Activated CD4-positive, alpha-beta T cell treated with anti-CD3 and anti-CD28 coated beads, Interleukin-2, amount 10 ng/mL, durations not matched to agents 7 days and 5 days (primary cell): ENCODE measurements at regions of chr12 and their contacts with region 1.

Region 1: GRCh38 chr12:47882781-47883546 is 21.8 kb downstream of the VDR start:
- DNase-seq: peak; percentile 63
- H3K4me3 Mint-ChIP-seq: peak overlapping the region; percentile 72
- H3K27ac Mint-ChIP-seq: peak overlapping the region; percentile 95
- H3K4me1 Mint-ChIP-seq: peaks cover 62% of the 10 kb centered on the region
- H3K27me3 Mint-ChIP-seq: no peaks in the 10 kb centered on the region

Region 2: DNA sequence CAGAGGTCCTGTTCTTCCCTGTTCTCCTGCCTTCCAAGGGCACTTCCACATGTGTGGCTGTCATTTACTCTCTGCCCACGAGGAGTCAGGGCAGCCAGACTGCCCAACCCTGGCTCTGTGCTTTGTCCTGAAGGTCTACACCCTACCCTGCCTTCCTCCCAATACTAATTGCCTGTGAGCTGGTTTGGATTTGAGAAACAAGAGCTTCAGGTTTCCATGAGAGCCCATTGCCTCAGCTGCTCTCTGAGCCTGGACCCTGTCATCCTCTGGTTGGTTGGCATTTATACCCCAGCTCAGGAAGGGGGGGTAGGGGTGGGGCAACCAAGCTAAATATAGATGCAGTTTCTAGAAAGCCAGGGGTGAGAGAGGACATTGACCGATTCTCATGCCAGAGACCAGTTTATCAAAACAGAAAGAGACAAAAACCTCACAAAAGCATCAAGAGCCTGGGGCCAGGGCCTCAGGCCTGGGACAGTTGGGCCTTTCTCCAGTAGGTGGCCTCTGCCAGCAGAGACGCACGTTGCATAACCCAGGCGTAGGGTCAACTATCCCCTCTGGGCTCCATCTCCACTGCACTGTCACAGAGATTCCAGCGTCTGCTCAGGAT is 12.7 kb before region 1 on chr12:
- CTCF ChIA-PET with region 1: interaction called, 34 read pairs
- POLR2A ChIA-PET with region 1: interaction called, 3 read pairs
- DNase-seq: no peak
- H3K4me3 Mint-ChIP-seq: no peak overlapping the region
- H3K27ac Mint-ChIP-seq: peak overlapping the region; percentile 50
- H3K4me1 Mint-ChIP-seq: peaks cover 54% of the 10 kb centered on the region
- H3K27me3 Mint-ChIP-seq: no peaks in the 10 kb centered on the region

Region 3: GRCh38 chr12:47904713-47905310 is 21.8 kb after region 1 on chr12 and contains the start of gene VDR:
- CTCF ChIA-PET with region 1: interaction called, 170 read pairs
- POLR2A ChIA-PET with region 1: interaction called, 5 read pairs
- DNase-seq: peak; percentile 73
- H3K4me3 Mint-ChIP-seq: peak within 1 kb of the TSS; percentile 84
- H3K27ac Mint-ChIP-seq: peak within 1 kb of the TSS; percentile 78
- H3K4me1 Mint-ChIP-seq: peaks cover 51% of the 10 kb centered on the region
- H3K27me3 Mint-ChIP-seq: peaks cover 34% of the 10 kb centered on the region
- total RNA-seq, gene VDR: 16.4 to 17.3 TPM

Region 4: DNA sequence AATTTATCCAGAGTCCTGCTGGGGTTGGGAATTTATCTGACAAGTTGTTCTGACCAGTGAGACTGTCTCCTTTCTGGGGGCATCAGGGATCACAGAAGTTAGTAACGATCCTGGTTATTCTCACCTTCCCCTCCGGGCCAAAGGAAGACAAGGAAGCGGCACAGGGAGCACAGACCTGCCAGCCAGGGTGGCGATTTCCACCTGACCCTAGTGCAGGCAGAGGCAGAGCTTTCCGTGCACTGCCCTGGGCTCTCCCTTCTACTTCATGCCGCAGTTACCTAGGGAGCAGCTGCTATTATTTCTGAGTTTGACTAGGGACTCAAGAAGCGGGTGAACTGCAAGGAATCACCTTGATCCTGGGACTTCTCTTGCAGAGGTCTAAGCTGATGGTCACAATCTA is 87.9 kb after region 1 on chr12:
- CTCF ChIA-PET with region 1: no interaction called
- POLR2A ChIA-PET with region 1: no interaction called
- DNase-seq: no peak
- H3K4me3 Mint-ChIP-seq: no peak overlapping the region
- H3K27ac Mint-ChIP-seq: peak overlapping the region; percentile 6
- H3K4me1 Mint-ChIP-seq: peaks cover 12% of the 10 kb centered on the region
- H3K27me3 Mint-ChIP-seq: no peaks in the 10 kb centered on the region

Region 5: GRCh38 chr12:48132826-48133225 is 249.9 kb after region 1 on chr12:
- CTCF ChIA-PET with region 1: no interaction called
- POLR2A ChIA-PET with region 1: interaction called, 13 read pairs
- DNase-seq: no peak
- H3K4me3 Mint-ChIP-seq: no peak overlapping the region
- H3K27ac Mint-ChIP-seq: no peak overlapping the region
- H3K4me1 Mint-ChIP-seq: no peaks in the 10 kb centered on the region
- H3K27me3 Mint-ChIP-seq: no peaks in the 10 kb centered on the region